ACHN (cell line): ENCODE measurements at regions of chr12 and their contacts with region 1.

Region 1: DNA sequence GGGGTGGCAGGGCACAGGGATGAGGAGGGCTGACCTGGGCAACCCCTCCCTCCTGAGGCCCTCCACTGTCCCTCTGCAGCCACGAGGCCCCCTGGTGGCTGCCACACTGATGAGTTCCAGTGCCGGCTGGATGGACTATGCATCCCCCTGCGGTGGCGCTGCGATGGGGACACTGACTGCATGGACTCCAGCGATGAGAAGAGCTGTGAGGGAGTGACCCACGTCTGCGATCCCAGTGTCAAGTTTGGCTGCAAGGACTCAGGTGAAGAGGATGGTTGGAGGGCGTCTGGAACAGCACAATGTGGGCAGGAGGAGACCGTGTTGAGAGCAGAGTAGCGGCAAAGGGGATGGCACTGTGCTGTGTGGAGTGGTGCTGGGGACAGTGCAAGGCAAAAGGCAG is 25.7 kb upstream of the LRP1-AS start:
- DNase-seq: peak; percentile 43

Region 2: GRCh38 chr12:57124259-57124877 is 48.7 kb before region 1 on chr12:
- in situ Hi-C with region 1: loop called (anchors 5 kb)
- DNase-seq: peak; percentile 86